ENCODE measurements at regions of chr12 and their contacts with region 1.

Region 1: GRCh38 chr12:129911428-129912049 is 7.7 kb upstream of the TMEM132D start:
- DNase-seq: peak; percentile 22 to 86 (median 62)
- ATAC-seq: peak; percentile 68 to 95 (median 92)
- H3K4me3 ChIP-seq: no peak overlapping the region
- H3K27ac ChIP-seq: no peak overlapping the region
- H3K4me1 ChIP-seq: no peaks in the 10 kb centered on the region
- H3K27me3 ChIP-seq: peaks cover 0 to 14% (median 0%) of the 10 kb centered on the region in 4 donors
- CTCF ChIP-seq: peak; percentile 25 to 73 (median 64)

Region 2: GRCh38 chr12:128259556-128260070 is 1651.9 kb before region 1 on chr12:
- intact Hi-C with region 1: loop called in 1 of 3 experiments (anchors 10 kb)
- DNase-seq: peak in 3 of 6 donors; percentile 7 to 48 (median 32)
- ATAC-seq: peak in 3 of 4 donors; percentile 63 to 74 (median 72)
- H3K4me3 ChIP-seq: no peak overlapping the region
- H3K27ac ChIP-seq: no peak overlapping the region
- H3K4me1 ChIP-seq: no peaks in the 10 kb centered on the region
- H3K27me3 ChIP-seq: no peaks in the 10 kb centered on the region
- CTCF ChIP-seq: peak; percentile 49 to 69 (median 56)

Region 3: GRCh38 chr12:128783129-128783574 is 1128.4 kb before region 1 on chr12:
- intact Hi-C with region 1: loop called in 1 of 3 experiments (anchors 10 kb)
- DNase-seq: no peak
- ATAC-seq: peak in 1 of 4 donors; percentile 18
- H3K4me3 ChIP-seq: no peak overlapping the region
- H3K27ac ChIP-seq: no peak overlapping the region
- H3K4me1 ChIP-seq: no peaks in the 10 kb centered on the region
- H3K27me3 ChIP-seq: peaks cover 0 to 4% (median 0%) of the 10 kb centered on the region in 4 donors
- CTCF ChIP-seq: no peak

Region 4: DNA sequence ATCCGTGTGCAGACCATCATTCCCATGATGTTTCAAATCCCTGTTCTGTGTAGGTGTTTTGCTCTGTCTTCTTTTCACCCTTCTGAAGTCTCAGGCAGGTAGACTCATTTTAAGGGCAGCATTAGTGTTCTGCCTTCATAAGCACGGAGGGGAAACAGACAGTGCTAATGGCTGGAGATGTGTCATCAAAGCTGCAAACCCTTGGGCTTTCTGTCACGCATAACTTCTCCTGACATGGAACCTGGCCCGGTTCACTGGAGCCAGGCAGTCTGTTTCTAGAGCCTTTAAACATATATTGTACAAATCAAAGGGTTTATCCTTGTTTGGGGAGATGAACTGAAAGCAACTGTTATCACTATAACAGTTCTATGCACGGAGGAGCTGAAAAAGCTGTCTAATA is 149.1 kb before region 1 on chr12:
- intact Hi-C with region 1: no loop called
- DNase-seq: no peak
- ATAC-seq: no peak
- H3K4me3 ChIP-seq: no peak overlapping the region
- H3K27ac ChIP-seq: no peak overlapping the region
- H3K4me1 ChIP-seq: no peaks in the 10 kb centered on the region
- H3K27me3 ChIP-seq: no peaks in the 10 kb centered on the region
- CTCF ChIP-seq: no peak

Region 5: GRCh38 chr12:130240831-130241590 is 329.5 kb after region 1 on chr12:
- intact Hi-C with region 1: no loop called
- DNase-seq: peak in 3 of 6 donors; percentile 37 to 79 (median 37)
- ATAC-seq: no peak
- H3K4me3 ChIP-seq: no peak overlapping the region
- H3K27ac ChIP-seq: no peak overlapping the region
- H3K4me1 ChIP-seq: no peaks in the 10 kb centered on the region
- H3K27me3 ChIP-seq: no peaks in the 10 kb centered on the region
- CTCF ChIP-seq: no peak

Measured in pancreas (tissue), 10 donors.